PC-3 (cell line): ENCODE measurements at regions of chr4 and their contacts with region 1.

Region 1: GRCh38 chr4:20506827-20507226 is 193.4 kb upstream of the PACRGL start:
- DNase-seq: peak; percentile 76
- ATAC-seq: peak; percentile 94
- H3K4me3 ChIP-seq: no peak overlapping the region
- H3K27ac ChIP-seq: peak overlapping the region; percentile 48
- H3K4me1 ChIP-seq: peaks cover 18% of the 10 kb centered on the region
- H3K27me3 ChIP-seq: no peaks in the 10 kb centered on the region
- CTCF ChIP-seq: no peak

Region 2: DNA sequence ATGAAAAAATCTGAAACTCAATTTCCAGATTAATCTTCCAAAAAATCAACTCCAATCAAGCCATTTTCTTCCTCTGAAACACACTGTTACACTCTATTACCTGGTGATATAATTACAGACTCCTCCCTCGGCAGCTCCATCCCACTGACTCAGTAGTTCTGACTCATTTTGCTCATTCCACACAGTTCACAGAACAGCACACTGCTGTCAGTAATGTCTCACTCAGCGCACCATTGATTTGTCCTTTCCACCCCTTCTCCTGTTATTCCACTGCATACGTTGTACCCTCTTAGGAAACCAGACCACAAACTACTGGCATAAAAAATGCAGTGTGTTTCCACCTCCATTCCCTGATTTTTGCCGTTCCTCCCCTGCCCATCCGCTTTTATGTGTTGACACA is 42.4 kb before region 1 on chr4:
- CTCF ChIA-PET with region 1: no interaction called
- POLR2A ChIA-PET with region 1: no interaction called
- intact Hi-C with region 1: loop called (anchors 5 kb)
- DNase-seq: peak; percentile 77
- ATAC-seq: peak; percentile 99
- H3K4me3 ChIP-seq: no peak overlapping the region; the same call in 1 of the 2 replicates
- H3K27ac ChIP-seq: peak overlapping the region; percentile 38
- H3K4me1 ChIP-seq: peaks cover 20% of the 10 kb centered on the region
- H3K27me3 ChIP-seq: no peaks in the 10 kb centered on the region
- CTCF ChIP-seq: no peak

Region 3: GRCh38 chr4:20554134-20554533 is 47.3 kb after region 1 on chr4:
- CTCF ChIA-PET with region 1: no interaction called
- POLR2A ChIA-PET with region 1: no interaction called
- intact Hi-C with region 1: loop called (anchors 2 kb)
- DNase-seq: no peak
- ATAC-seq: no peak
- H3K4me3 ChIP-seq: no peak overlapping the region
- H3K27ac ChIP-seq: no peak overlapping the region
- H3K4me1 ChIP-seq: no peaks in the 10 kb centered on the region
- H3K27me3 ChIP-seq: no peaks in the 10 kb centered on the region
- CTCF ChIP-seq: no peak